CD4-positive, alpha-beta memory T cell (primary cell): ENCODE measurements at regions of chr6 and their contacts with region 1.

Region 1: GRCh38 chr6:27893059-27893835 is 18.9 kb downstream of the OR2B2 start:
- DNase-seq: peak; percentile 91 to 94 (median 93)
- H3K4me3 ChIP-seq: peak overlapping the region; percentile 72 to 86
- H3K4me3 Mint-ChIP-seq: no peak overlapping the region
- H3K27ac ChIP-seq: peak overlapping the region; percentile 80
- H3K27ac Mint-ChIP-seq: no peak overlapping the region
- H3K4me1 ChIP-seq: peaks cover 30% of the 10 kb centered on the region
- H3K4me1 Mint-ChIP-seq: peaks cover 15 to 40% (median 28%) of the 10 kb centered on the region in 4 donors
- H3K27me3 ChIP-seq: no peaks in the 10 kb centered on the region
- H3K27me3 Mint-ChIP-seq: no peaks in the 10 kb centered on the region

Region 2: GRCh38 chr6:26031595-26032339 is 1861.5 kb before region 1 on chr6:
- CTCF ChIA-PET with region 1: interaction called, 4 read pairs
- POLR2A ChIA-PET with region 1: interaction called, 31 read pairs
- intact Hi-C with region 1: no loop called
- DNase-seq: peak; percentile 86 to 94 (median 89)
- H3K4me3 ChIP-seq: peak overlapping the region; percentile 53 to 67
- H3K4me3 Mint-ChIP-seq: peak overlapping the region; percentile 91 to 99 (median 94)
- H3K27ac ChIP-seq: peak overlapping the region; percentile 71
- H3K27ac Mint-ChIP-seq: peak overlapping the region; percentile 89 to 98 (median 96)
- H3K4me1 ChIP-seq: peaks cover 35% of the 10 kb centered on the region
- H3K4me1 Mint-ChIP-seq: peaks cover 33 to 54% (median 44%) of the 10 kb centered on the region in 4 donors
- H3K27me3 ChIP-seq: no peaks in the 10 kb centered on the region
- H3K27me3 Mint-ChIP-seq: peaks cover 0 to 3% of the 10 kb centered on the region in 2 donors

Region 3: DNA sequence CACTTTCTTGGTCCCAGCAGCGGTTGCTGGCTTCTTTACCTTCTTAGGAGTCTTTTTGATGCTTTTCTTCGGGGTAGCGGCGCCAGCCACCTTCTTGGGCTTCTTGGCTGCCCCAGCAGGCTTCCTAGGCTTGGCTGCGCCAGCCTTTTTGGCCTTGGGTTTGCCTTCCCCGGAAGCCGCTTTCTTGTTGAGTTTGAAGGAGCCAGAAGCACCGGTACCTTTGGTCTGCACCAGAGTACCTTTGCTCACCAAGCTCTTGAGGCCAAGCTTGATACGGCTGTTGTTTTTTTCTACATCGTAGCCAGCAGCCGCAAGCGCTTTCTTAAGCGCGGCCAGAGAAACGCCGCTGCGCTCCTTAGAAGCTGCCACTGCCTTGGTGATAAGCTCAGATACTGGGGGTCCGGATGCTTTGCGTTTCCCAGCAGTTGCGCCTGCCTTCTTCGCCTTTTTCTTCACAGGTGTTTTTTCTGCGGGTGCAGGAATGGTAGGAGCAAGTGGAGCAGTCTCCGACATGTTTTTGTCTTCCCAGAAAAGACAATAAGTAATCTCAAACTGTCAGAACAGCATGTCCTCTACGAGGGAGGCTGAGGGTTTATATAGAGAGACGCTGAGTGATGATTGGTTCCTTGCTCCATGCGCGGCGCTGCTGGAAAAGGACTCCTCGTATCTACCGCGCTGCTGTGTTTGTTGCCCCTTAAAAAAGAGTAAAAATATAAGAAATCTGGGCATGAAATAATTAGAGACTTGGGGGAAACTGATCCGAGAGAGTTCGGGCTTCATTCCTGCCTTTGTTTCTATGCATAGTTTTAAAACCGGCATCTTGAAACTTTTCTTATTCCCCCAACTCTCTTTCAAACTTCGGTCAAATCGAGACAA is 1658.6 kb before region 1 on chr6:
- CTCF ChIA-PET with region 1: no interaction called
- POLR2A ChIA-PET with region 1: interaction called, 25 read pairs
- intact Hi-C with region 1: no loop called
- DNase-seq: peak; percentile 70 to 87 (median 85)
- H3K4me3 ChIP-seq: peak overlapping the region; percentile 66 to 95
- H3K4me3 Mint-ChIP-seq: peak overlapping the region; percentile 93 to 99 (median 96)
- H3K27ac ChIP-seq: peak overlapping the region; percentile 83
- H3K27ac Mint-ChIP-seq: peak overlapping the region; percentile 90 to 99 (median 96)
- H3K4me1 ChIP-seq: peaks cover 23% of the 10 kb centered on the region
- H3K4me1 Mint-ChIP-seq: peaks cover 18 to 43% (median 26%) of the 10 kb centered on the region in 4 donors
- H3K27me3 ChIP-seq: no peaks in the 10 kb centered on the region
- H3K27me3 Mint-ChIP-seq: no peaks in the 10 kb centered on the region

Region 4: DNA sequence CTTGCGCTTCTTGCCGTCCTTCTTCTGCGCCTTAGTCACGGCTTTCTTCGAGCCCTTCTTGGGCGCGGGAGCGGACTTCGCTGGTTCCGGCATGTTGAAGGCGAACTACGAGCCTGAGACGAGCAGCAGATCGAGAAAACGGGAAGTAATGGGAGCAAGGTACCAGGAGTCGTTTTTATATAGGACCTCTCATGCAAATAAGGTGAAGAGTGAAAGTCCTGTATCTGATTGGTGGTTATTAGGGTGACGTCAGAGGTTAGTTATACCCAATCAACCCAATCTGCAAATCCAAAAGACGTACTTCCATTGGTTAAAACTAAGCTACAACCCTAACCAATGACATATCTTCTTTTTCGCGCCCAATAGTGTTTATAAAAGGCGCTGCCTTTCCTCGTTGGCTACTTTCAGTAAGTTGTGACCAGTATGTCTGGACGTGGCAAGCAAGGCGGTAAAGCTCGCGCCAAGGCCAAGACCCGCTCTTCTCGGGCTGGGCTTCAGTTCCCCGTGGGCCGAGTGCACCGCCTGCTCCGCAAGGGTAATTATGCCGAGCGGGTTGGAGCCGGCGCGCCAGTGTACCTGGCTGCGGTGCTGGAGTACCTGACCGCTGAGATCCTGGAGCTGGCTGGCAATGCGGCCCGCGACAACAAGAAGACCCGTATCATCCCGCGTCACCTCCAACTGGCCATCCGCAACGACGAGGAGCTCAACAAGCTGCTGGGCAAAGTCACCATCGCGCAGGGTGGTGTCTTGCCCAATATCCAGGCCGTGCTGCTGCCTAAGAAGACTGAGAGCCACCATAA is 746.3 kb before region 1 on chr6:
- CTCF ChIA-PET with region 1: interaction called, 4 read pairs
- POLR2A ChIA-PET with region 1: interaction called, 122 read pairs
- intact Hi-C with region 1: loop called (anchors 1 kb)
- DNase-seq: peak; percentile 85 to 96 (median 94)
- H3K4me3 ChIP-seq: peak overlapping the region; percentile 76 to 77
- H3K4me3 Mint-ChIP-seq: no peak overlapping the region
- H3K27ac ChIP-seq: peak overlapping the region; percentile 97
- H3K27ac Mint-ChIP-seq: no peak overlapping the region
- H3K4me1 ChIP-seq: peaks cover 22% of the 10 kb centered on the region
- H3K4me1 Mint-ChIP-seq: peaks cover 10 to 20% (median 13%) of the 10 kb centered on the region in 4 donors
- H3K27me3 ChIP-seq: no peaks in the 10 kb centered on the region
- H3K27me3 Mint-ChIP-seq: no peaks in the 10 kb centered on the region

Region 5: DNA sequence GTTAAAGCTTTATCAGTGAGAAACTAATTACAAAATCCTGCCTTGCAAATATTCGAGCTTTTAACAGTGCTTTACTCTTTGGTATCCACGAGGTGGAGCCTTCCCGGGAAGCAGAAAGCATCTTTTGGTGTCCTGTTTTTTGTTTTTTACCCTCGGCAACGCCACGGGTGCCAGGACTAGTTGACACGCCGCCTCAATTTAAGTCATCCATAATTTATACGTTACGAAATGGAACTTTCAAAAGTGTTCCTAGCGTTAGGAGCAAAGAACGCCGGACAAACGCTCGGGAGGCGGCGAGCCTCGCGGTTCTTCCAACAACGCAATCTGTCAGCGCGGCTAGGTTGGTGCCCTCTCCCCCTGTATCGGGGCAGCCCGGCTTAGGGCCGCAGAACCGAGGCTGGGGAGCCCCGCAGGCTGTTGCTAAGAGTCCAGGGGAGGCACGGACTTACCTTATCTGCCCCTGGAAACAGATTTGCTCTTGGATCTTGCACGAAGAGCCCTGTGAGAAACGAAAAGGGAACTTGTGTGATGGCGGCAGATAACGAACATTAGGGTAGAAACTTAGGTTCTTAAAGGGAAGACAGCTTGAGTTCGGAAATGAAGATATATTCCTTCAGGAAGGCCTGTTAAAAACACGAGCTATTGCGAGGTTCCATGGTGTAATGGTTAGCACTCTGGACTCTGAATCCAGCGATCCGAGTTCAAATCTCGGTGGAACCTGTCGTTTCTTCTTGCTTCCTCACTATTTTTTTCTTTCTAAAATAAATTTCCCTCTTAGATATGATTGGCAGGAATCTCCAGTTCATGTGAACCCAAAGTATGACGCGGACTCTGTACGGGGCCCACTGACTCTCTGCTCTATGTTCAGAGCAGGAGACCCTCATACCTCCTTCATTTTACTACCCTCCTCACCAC is 374.1 kb before region 1 on chr6:
- CTCF ChIA-PET with region 1: interaction called, 24 read pairs
- POLR2A ChIA-PET with region 1: interaction called, 13 read pairs
- intact Hi-C with region 1: loop called (anchors 1 kb)
- DNase-seq: peak; percentile 63 to 72 (median 68)
- H3K4me3 ChIP-seq: peak overlapping the region; percentile 66 to 76
- H3K4me3 Mint-ChIP-seq: peak overlapping the region; percentile 87 to 93 (median 89)
- H3K27ac ChIP-seq: peak overlapping the region; percentile 64
- H3K27ac Mint-ChIP-seq: peak overlapping the region; percentile 51 to 91 (median 88)
- H3K4me1 ChIP-seq: peaks cover 9% of the 10 kb centered on the region
- H3K4me1 Mint-ChIP-seq: peaks cover 12 to 31% (median 18%) of the 10 kb centered on the region in 4 donors
- H3K27me3 ChIP-seq: no peaks in the 10 kb centered on the region
- H3K27me3 Mint-ChIP-seq: peaks cover 9 to 20% of the 10 kb centered on the region in 2 donors

Region 6: GRCh38 chr6:27816906-27817305 is 76.3 kb before region 1 on chr6:
- CTCF ChIA-PET with region 1: interaction called, 137 read pairs
- POLR2A ChIA-PET with region 1: interaction called, 476 read pairs
- intact Hi-C with region 1: loop called (anchors 1 kb)
- DNase-seq: no peak
- H3K4me3 ChIP-seq: no peak overlapping the region
- H3K4me3 Mint-ChIP-seq: no peak overlapping the region
- H3K27ac ChIP-seq: no peak overlapping the region
- H3K27ac Mint-ChIP-seq: peak overlapping the region in 1 of 7 donors; percentile 52
- H3K4me1 ChIP-seq: peaks cover 17% of the 10 kb centered on the region
- H3K4me1 Mint-ChIP-seq: peaks cover 7 to 24% (median 18%) of the 10 kb centered on the region in 4 donors
- H3K27me3 ChIP-seq: no peaks in the 10 kb centered on the region
- H3K27me3 Mint-ChIP-seq: no peaks in the 10 kb centered on the region

Region 7: GRCh38 chr6:28863604-28864320 is 970.5 kb after region 1 on chr6:
- CTCF ChIA-PET with region 1: interaction called, 4 read pairs
- POLR2A ChIA-PET with region 1: interaction called, 6 read pairs
- intact Hi-C with region 1: loop called (anchors 5 kb)
- DNase-seq: peak; percentile 88 to 91 (median 89)
- H3K4me3 ChIP-seq: peak overlapping the region; percentile 53 to 85
- H3K4me3 Mint-ChIP-seq: peak overlapping the region; percentile 92 to 97 (median 94)
- H3K27ac ChIP-seq: peak overlapping the region; percentile 45
- H3K27ac Mint-ChIP-seq: peak overlapping the region; percentile 79 to 99 (median 97)
- H3K4me1 ChIP-seq: peaks cover 14% of the 10 kb centered on the region
- H3K4me1 Mint-ChIP-seq: peaks cover 21 to 64% (median 43%) of the 10 kb centered on the region in 4 donors
- H3K27me3 ChIP-seq: no peaks in the 10 kb centered on the region
- H3K27me3 Mint-ChIP-seq: peaks cover 4 to 5% of the 10 kb centered on the region in 2 donors